SK-MEL-5 (cell line): ENCODE measurements at regions of chr7 and their contacts with region 1.

Region 1: DNA sequence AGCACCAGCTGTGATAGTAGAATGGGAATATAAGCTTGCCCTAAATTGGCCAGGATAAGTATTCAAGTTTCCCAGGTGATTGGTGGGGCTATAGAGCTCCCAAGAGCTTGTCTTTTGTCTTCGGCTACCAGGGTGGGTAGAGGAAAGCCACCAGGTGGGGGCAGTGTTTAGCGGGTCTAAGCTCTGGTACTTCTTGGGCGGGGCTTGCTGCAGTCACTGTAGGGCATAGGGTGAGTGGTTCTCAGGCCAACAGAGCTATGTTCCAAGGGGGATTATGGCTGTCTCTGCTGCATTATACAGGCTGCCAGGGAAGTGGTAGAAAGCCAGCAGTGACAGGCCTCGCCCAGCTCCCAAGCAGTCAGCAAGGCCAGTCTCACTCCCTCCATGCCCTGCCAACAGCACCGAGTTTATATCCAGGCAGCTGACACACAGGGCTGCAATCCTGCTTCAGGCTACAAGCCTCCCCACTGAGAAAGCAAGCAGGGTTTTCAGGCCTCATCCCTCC is 110.7 kb downstream of the ZNF467 start:
- DNase-seq: peak; percentile 93

Region 2: DNA sequence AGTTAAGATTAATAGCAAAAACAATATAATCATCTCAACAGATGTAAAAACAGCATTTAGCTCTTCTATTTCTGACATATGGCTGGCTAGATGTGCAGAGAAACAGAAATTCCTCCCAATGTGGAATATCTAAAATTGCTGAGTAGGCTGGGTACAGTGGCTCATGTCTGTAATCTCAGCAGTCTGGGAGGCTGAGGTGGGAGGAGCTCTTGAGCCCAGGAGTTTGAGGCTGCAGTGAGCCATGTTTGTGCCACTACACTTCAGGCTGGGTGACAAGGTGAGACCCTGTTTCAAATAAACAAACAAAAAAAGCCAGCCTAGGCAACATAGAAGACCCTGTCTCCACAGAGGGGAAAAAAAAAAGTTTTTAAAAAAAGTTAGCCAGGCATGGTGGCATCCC is 183.0 kb before region 1 on chr7:
- in situ Hi-C with region 1: no loop called
- DNase-seq: no peak

Region 3: DNA sequence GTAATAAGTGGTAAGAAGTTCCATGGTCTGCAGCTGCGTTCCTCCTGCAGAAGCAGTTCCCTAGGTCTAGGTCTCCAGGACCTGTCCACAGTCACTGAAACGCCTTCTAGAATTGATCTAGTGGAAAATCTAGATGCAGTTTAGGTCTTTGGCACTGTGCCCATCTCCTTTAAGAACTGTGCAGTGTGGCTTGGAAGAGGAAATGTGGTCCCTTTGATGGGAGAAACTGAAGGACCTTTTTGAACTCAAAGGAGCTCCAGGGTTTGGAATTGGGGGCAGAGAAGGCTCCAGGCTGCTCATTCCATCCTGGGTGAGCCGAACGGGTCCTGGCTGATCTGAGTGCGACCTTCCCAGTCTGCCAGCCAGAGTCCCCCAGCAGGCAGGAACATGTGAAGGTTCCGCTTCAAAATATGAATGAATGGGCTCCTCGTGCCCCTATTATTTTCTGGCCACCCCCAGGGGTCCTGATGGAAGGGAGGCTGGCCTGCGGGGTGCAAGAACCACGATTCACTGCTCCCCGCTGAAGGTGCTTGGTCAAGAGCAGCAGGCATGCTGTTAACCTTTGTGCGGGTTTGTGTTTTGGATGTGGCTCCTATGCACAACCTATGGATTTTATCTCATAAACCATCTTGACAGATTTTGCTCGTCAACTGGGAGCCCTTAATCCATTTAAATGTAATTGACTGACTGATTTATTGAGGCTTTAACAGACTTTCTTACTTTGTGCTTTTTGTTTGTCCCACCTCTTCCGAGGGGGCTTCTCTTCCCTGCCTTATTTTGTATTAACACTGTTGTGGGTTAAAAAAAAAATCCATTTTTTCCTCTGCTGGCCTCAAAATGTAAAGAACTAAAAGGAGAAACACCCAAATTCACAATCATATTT is 74.1 kb after region 1 on chr7:
- in situ Hi-C with region 1: no loop called
- DNase-seq: no peak

Region 4: DNA sequence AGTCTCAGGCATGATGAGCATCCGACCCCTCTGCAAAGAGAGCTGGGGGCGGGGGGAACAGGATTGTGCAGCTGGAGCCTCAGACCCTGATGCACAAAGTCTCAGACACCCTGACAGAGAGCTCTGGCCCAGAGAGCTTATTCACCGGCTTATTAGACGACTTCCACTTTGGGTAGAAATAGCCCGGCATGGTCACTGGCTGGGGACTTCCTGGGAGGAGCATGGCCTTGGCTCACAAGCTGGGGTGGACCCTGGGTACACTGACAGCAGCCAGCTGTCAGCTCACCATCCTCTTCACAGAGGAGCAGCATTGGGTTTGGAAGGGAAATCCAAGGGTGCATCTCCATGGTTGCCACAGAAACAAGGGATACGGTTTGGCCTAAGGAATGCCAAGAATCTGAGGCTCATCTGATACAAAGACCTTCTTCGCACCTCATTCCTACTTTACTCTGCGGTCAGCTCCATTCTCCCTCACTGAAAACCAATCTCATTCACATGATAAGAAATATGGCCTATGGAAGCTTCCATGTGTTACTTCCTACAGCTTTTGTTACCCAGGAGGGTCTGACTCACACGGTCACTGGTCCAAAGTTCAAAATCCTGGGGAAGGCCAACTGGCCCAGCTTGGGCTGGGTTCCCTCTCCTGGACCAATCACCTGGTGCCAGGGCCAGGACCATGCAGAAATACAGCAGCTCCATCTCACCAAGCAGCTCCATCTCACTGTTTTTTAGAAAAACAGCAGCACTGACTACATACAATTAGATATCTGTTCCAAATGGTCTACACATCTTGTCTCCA is 85.6 kb after region 1 on chr7:
- in situ Hi-C with region 1: loop called (anchors 5 kb)
- DNase-seq: no peak